ENCODE measurements at regions of chr12 and their contacts with region 1.

Region 1: GRCh38 chr12:31749024-31749704 is 20.3 kb upstream of the AMN1 start:
- DNase-seq: peak in 1 of 9 donors; percentile 57
- ATAC-seq: peak; percentile 89
- H3K4me3 ChIP-seq: peak overlapping the region; percentile 34
- H3K4me3 Mint-ChIP-seq: peak overlapping the region in 7 of 10 donors; percentile 21 to 66 (median 38)
- H3K27ac ChIP-seq: no peak overlapping the region
- H3K27ac Mint-ChIP-seq: peak overlapping the region in 8 of 9 donors; percentile 14 to 83 (median 63)
- H3K4me1 ChIP-seq: peaks cover 18 to 20% of the 10 kb centered on the region in 2 donors
- H3K4me1 Mint-ChIP-seq: peaks cover 31 to 76% (median 65%) of the 10 kb centered on the region in 7 donors
- H3K27me3 ChIP-seq: no peaks in the 10 kb centered on the region
- H3K27me3 Mint-ChIP-seq: no peaks in the 10 kb centered on the region

Region 2: GRCh38 chr12:31440586-31440985 is 308.6 kb before region 1 on chr12:
- CTCF ChIA-PET with region 1: no interaction called
- POLR2A ChIA-PET with region 1: no interaction called
- intact Hi-C with region 1: no loop called
- DNase-seq: no peak
- ATAC-seq: no peak
- H3K4me3 ChIP-seq: no peak overlapping the region
- H3K4me3 Mint-ChIP-seq: no peak overlapping the region
- H3K27ac ChIP-seq: no peak overlapping the region
- H3K27ac Mint-ChIP-seq: no peak overlapping the region
- H3K4me1 ChIP-seq: no peaks in the 10 kb centered on the region
- H3K4me1 Mint-ChIP-seq: no peaks in the 10 kb centered on the region
- H3K27me3 ChIP-seq: no peaks in the 10 kb centered on the region
- H3K27me3 Mint-ChIP-seq: peaks cover 0 to 11% (median 0%) of the 10 kb centered on the region in 5 donors

Region 3: DNA sequence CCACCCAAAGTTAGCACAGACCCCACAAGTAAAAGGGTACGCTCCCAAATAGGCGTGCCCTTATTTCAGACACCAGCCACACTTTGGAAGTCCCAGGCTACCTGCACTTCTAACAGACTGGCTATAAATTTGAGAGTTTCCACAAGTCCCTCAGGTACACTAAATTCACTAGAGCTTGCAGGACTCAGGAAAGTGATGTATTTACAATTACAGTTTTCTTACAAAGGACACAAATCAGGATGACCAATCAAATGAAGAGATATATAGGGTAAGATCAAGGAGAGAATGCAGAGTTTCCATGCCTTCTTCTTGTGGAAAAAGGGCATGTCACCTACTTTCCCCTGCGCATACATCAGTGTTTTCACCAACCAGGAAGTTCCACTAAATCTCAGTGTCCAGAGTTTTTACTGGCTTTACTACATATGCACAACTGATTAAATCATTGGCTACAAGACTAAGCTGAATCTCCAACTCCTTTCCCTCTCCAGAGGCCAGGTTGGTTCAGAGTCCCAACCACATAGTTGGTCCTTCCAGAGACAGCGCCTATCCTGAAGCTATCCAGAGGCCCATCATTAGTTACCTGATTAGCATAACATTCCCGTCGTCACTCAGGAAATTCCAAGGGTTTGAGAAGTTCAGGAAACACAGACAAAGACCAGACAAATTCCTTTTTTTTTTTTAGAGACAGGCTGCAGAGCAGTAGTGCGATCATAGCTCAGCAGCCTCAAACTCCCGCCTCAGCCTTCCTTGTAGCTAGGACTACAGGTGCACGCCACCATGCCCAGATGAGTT is 242.5 kb before region 1 on chr12:
- CTCF ChIA-PET with region 1: no interaction called
- POLR2A ChIA-PET with region 1: no interaction called
- intact Hi-C with region 1: no loop called
- DNase-seq: no peak
- ATAC-seq: no peak
- H3K4me3 ChIP-seq: no peak overlapping the region
- H3K4me3 Mint-ChIP-seq: no peak overlapping the region
- H3K27ac ChIP-seq: no peak overlapping the region
- H3K27ac Mint-ChIP-seq: no peak overlapping the region
- H3K4me1 ChIP-seq: no peaks in the 10 kb centered on the region
- H3K4me1 Mint-ChIP-seq: no peaks in the 10 kb centered on the region
- H3K27me3 ChIP-seq: no peaks in the 10 kb centered on the region
- H3K27me3 Mint-ChIP-seq: peaks cover 0 to 6% (median 0%) of the 10 kb centered on the region in 5 donors

Region 4: GRCh38 chr12:31736472-31736871 is 12.7 kb before region 1 on chr12:
- CTCF ChIA-PET with region 1: interaction called, 3 read pairs
- POLR2A ChIA-PET with region 1: interaction called, 10 read pairs
- intact Hi-C with region 1: loop called (anchors 1 kb)
- DNase-seq: peak in 8 of 9 donors; percentile 50 to 92 (median 85)
- ATAC-seq: peak; percentile 96
- H3K4me3 ChIP-seq: no peak overlapping the region
- H3K4me3 Mint-ChIP-seq: peak overlapping the region; percentile 34 to 78 (median 42)
- H3K27ac ChIP-seq: peak overlapping the region; percentile 63
- H3K27ac Mint-ChIP-seq: peak overlapping the region; percentile 78 to 97 (median 91)
- H3K4me1 ChIP-seq: peaks cover 4 to 27% of the 10 kb centered on the region in 2 donors
- H3K4me1 Mint-ChIP-seq: peaks cover 19 to 81% (median 67%) of the 10 kb centered on the region in 7 donors
- H3K27me3 ChIP-seq: no peaks in the 10 kb centered on the region
- H3K27me3 Mint-ChIP-seq: no peaks in the 10 kb centered on the region

Region 5: GRCh38 chr12:31759632-31760459 is 10.7 kb after region 1 on chr12:
- CTCF ChIA-PET with region 1: no interaction called
- POLR2A ChIA-PET with region 1: interaction called, 4 read pairs
- intact Hi-C with region 1: loop called in 1 of 2 experiments (anchors 1 kb)
- DNase-seq: no peak
- ATAC-seq: no peak
- H3K4me3 ChIP-seq: no peak overlapping the region
- H3K4me3 Mint-ChIP-seq: peak overlapping the region in 2 of 10 donors; percentile 1 to 5
- H3K27ac ChIP-seq: no peak overlapping the region
- H3K27ac Mint-ChIP-seq: peak overlapping the region in 7 of 9 donors; percentile 14 to 65 (median 37)
- H3K4me1 ChIP-seq: no peaks in the 10 kb centered on the region
- H3K4me1 Mint-ChIP-seq: peaks cover 3 to 22% (median 18%) of the 10 kb centered on the region in 7 donors
- H3K27me3 ChIP-seq: no peaks in the 10 kb centered on the region
- H3K27me3 Mint-ChIP-seq: no peaks in the 10 kb centered on the region

Region 6: DNA sequence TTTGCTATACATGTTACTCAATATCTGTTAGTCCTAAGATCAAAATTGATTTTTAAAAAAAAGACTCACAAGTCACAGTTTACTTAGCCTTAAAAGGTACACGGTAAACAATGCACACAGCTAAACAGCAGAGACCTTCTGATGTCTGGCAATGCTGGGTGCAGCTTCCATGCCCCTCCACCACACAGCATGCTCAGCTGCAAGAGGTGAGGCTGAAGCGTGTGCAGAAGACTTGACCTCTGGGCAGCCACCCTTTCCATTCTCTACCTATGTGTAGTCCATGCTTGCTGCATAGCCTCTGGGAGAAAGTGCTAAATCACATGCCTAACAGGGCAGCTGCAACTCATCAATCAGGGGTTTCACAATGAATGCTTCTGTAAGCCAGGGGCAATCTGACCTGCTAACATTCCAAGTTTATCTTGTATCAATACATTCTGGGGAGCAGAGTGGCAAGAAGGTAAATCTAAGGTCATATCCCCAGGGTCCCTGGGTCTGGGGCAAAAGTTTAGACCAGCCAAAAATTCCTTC is 24.1 kb after region 1 on chr12:
- CTCF ChIA-PET with region 1: no interaction called
- POLR2A ChIA-PET with region 1: no interaction called
- intact Hi-C with region 1: no loop called
- DNase-seq: no peak
- ATAC-seq: no peak
- H3K4me3 ChIP-seq: no peak overlapping the region
- H3K4me3 Mint-ChIP-seq: peak overlapping the region in 3 of 10 donors; percentile 26 to 40 (median 32)
- H3K27ac ChIP-seq: no peak overlapping the region
- H3K27ac Mint-ChIP-seq: peak overlapping the region in 8 of 9 donors; percentile 33 to 90 (median 76)
- H3K4me1 ChIP-seq: peaks cover 0 to 13% of the 10 kb centered on the region in 2 donors
- H3K4me1 Mint-ChIP-seq: peaks cover 6 to 31% (median 23%) of the 10 kb centered on the region in 7 donors
- H3K27me3 ChIP-seq: no peaks in the 10 kb centered on the region
- H3K27me3 Mint-ChIP-seq: no peaks in the 10 kb centered on the region

Region 7: DNA sequence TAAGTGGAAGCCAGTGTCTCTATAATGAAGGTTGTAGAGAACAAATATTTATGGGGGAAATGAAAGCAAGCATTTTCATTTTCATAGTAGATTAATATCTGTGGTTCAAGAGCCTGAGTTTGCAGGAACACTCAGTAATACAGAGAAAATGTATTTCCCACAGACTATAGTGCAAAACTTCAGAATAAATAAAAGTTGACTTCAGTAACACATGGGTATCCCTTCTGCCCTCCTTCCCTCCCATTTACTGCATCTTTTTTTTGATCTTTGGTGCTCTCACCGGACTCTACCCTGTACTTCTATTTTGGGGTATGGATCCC is 55.0 kb after region 1 on chr12:
- CTCF ChIA-PET with region 1: no interaction called
- POLR2A ChIA-PET with region 1: no interaction called
- intact Hi-C with region 1: loop called in 1 of 2 experiments (anchors 5 kb)
- DNase-seq: no peak
- ATAC-seq: no peak
- H3K4me3 ChIP-seq: peak overlapping the region; percentile 32
- H3K4me3 Mint-ChIP-seq: peak overlapping the region; percentile 33 to 91 (median 82)
- H3K27ac ChIP-seq: no peak overlapping the region
- H3K27ac Mint-ChIP-seq: peak overlapping the region; percentile 58 to 95 (median 88)
- H3K4me1 ChIP-seq: peaks cover 0 to 41% of the 10 kb centered on the region in 2 donors
- H3K4me1 Mint-ChIP-seq: peaks cover 26 to 67% (median 61%) of the 10 kb centered on the region in 7 donors
- H3K27me3 ChIP-seq: no peaks in the 10 kb centered on the region
- H3K27me3 Mint-ChIP-seq: no peaks in the 10 kb centered on the region

Region 8: GRCh38 chr12:31874961-31875608 is 125.9 kb after region 1 on chr12:
- CTCF ChIA-PET with region 1: no interaction called
- POLR2A ChIA-PET with region 1: interaction called, 5 read pairs
- intact Hi-C with region 1: loop called in 1 of 2 experiments (anchors 1 kb)
- DNase-seq: peak; percentile 17 to 84 (median 63)
- ATAC-seq: peak; percentile 96
- H3K4me3 ChIP-seq: no peak overlapping the region
- H3K4me3 Mint-ChIP-seq: peak overlapping the region; percentile 53 to 84 (median 72)
- H3K27ac ChIP-seq: peak overlapping the region; percentile 90
- H3K27ac Mint-ChIP-seq: peak overlapping the region; percentile 95 to 100 (median 98)
- H3K4me1 ChIP-seq: peaks cover 12 to 29% of the 10 kb centered on the region in 2 donors
- H3K4me1 Mint-ChIP-seq: peaks cover 29 to 66% (median 55%) of the 10 kb centered on the region in 7 donors
- H3K27me3 ChIP-seq: no peaks in the 10 kb centered on the region
- H3K27me3 Mint-ChIP-seq: no peaks in the 10 kb centered on the region

Measured in naive thymus-derived CD4-positive, alpha-beta T cell (primary cell).